Panc1 (cell line): ENCODE measurements at regions of chr3 and their contacts with region 1.

Region 1: DNA sequence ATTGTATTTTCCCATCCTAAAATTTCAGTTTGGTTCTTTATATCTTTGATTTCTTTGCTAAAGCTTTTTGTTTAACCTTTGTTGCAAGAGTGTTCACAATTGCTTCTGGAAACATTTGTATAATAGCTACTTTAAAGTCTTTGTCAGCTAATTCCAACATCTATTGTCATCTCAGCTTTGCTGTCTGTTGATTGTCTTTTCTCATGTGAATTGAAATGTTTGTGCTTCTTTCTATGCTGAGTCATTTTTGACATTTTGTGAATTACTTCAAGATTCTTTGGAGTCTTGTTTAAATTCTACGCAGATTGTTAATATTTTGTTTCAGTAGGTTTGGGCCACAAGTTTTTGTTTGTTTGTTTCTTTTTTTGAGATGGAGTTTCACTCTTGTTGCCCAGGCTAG is 73.2 kb downstream of the SUCNR1 start:
- DNase-seq: no peak
- ATAC-seq: no peak
- H3K4me3 ChIP-seq: no peak overlapping the region
- H3K27ac ChIP-seq: no peak overlapping the region
- H3K4me1 ChIP-seq: no peaks in the 10 kb centered on the region
- H3K27me3 ChIP-seq: no peaks in the 10 kb centered on the region
- CTCF ChIP-seq: no peak

Region 2: DNA sequence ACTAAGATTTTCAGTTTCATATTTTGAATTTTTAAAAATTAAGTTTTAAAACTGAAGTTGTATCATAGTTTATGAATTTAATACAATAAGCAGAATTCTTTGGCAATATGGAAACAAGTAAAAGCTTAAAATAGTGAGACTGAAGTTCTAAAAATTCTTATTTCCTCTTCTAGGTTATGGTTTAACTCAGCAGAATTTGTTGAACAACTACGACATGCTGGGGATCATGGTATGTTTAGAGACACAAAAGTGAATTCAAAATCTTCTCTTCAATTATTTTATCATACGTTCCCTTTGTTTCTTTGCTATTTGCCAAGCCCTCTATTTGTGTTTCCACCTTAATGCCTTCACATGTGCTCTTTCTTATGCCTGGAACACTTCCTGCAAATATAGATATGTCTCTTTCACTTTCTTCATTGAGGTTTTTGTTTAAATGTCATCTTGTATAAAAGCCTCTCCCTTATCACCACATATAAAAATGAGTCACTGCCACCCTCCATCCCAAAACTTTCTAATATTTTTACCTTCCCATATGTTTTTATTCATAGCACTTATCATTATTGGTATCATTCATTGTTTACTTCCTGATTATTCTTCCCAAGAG is 66.8 kb before region 1 on chr3:
- CTCF ChIA-PET with region 1: no interaction called
- POLR2A ChIA-PET with region 1: no interaction called
- in situ Hi-C with region 1: no loop called
- intact Hi-C with region 1: loop called (anchors 10 kb)
- DNase-seq: no peak
- ATAC-seq: no peak
- H3K4me3 ChIP-seq: no peak overlapping the region
- H3K27ac ChIP-seq: no peak overlapping the region
- H3K4me1 ChIP-seq: no peaks in the 10 kb centered on the region
- H3K27me3 ChIP-seq: no peaks in the 10 kb centered on the region
- CTCF ChIP-seq: no peak

Region 3: GRCh38 chr3:151918253-151919029 is 28.2 kb before region 1 on chr3:
- CTCF ChIA-PET with region 1: no interaction called
- POLR2A ChIA-PET with region 1: no interaction called
- in situ Hi-C with region 1: no loop called
- intact Hi-C with region 1: no loop called
- DNase-seq: peak; percentile 56
- ATAC-seq: peak; percentile 81; the same call in 1 of the 2 replicates
- H3K4me3 ChIP-seq: no peak overlapping the region
- H3K27ac ChIP-seq: no peak overlapping the region
- H3K4me1 ChIP-seq: no peaks in the 10 kb centered on the region
- H3K27me3 ChIP-seq: no peaks in the 10 kb centered on the region
- CTCF ChIP-seq: peak; percentile 75; the same call in 1 of the 2 replicates

Region 4: GRCh38 chr3:151976211-151977050 is 29.8 kb after region 1 on chr3:
- CTCF ChIA-PET with region 1: no interaction called
- POLR2A ChIA-PET with region 1: no interaction called
- in situ Hi-C with region 1: no loop called
- intact Hi-C with region 1: no loop called
- DNase-seq: peak; percentile 95
- ATAC-seq: peak; percentile 90
- H3K4me3 ChIP-seq: no peak overlapping the region
- H3K27ac ChIP-seq: peak overlapping the region; percentile 7; the same call in 1 of the 2 replicates
- H3K4me1 ChIP-seq: no peaks in the 10 kb centered on the region; the same call in 1 of the 2 replicates
- H3K27me3 ChIP-seq: no peaks in the 10 kb centered on the region
- CTCF ChIP-seq: no peak; the same call in 1 of the 2 replicates